ENCODE measurements at regions of chr2 and their contacts with region 1.

Region 1: GRCh38 chr2:138827426-138828054 is 47.4 kb upstream of the NXPH2 start:
- DNase-seq: peak; percentile 36
- H3K4me3 ChIP-seq: no peak overlapping the region
- CTCF ChIP-seq: peak; percentile 56

Region 2: DNA sequence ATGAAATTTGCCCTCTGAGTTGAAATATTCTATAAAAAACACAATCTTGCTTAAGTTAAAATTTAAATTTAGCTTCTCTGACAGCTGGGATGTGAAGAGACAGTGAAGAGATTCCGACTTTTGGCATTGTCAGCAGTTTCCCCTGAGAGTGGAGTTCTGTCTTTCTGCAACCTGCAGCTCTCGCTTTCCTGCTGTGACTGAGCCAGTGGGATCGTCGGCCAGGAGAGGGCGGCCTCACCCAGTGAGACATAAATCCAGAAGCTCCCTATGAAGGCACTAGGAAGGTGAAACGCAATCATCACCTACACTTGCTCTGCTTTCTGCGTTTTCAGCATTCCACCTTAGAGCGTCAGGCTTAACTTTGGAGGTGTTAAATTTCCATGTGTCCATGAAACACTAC is 938.7 kb before region 1 on chr2:
- CTCF ChIA-PET with region 1: interaction called, 10 read pairs
- POLR2A ChIA-PET with region 1: no interaction called
- DNase-seq: no peak
- H3K4me3 ChIP-seq: no peak overlapping the region
- CTCF ChIP-seq: peak; percentile 44

Region 3: DNA sequence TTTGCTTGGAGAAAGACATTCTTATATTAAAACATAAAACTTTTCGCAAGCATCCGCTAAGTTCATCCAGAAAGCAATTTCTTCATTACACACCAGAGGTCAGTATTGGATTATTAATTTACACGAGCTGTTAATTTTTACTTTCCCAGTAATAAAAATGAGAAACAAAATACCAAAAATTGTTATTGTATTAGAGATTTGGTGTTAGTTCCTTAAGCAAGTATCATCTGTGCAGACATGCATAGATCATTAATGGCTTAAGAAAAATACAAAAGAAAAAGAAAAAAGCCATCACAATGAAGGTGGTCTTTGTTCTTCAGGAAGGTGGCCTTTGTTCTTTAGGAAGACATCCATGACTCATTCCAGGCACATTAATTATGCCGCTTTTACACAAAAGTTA is 916.9 kb before region 1 on chr2:
- CTCF ChIA-PET with region 1: interaction called, 51 read pairs
- POLR2A ChIA-PET with region 1: no interaction called
- DNase-seq: no peak
- H3K4me3 ChIP-seq: no peak overlapping the region
- CTCF ChIP-seq: peak; percentile 16

Region 4: GRCh38 chr2:138846223-138846821 is 18.8 kb after region 1 on chr2:
- CTCF ChIA-PET with region 1: interaction called, 26 read pairs
- POLR2A ChIA-PET with region 1: no interaction called
- DNase-seq: no peak
- H3K4me3 ChIP-seq: no peak overlapping the region
- CTCF ChIP-seq: peak; percentile 64

Measured in AG04449 (cell line).